ENCODE measurements at regions of chr12 and their contacts with region 1.

Region 1: GRCh38 chr12:118183705-118184104 is 47.8 kb downstream of the PEBP1 start:
- DNase-seq: no peak
- H3K4me3 ChIP-seq: no peak overlapping the region
- CTCF ChIP-seq: no peak

Region 2: GRCh38 chr12:118120579-118121363 is 62.9 kb before region 1 on chr12:
- CTCF ChIA-PET with region 1: interaction called, 14 read pairs
- POLR2A ChIA-PET with region 1: no interaction called
- DNase-seq: no peak
- H3K4me3 ChIP-seq: no peak overlapping the region
- CTCF ChIP-seq: peak; percentile 80

Region 3: DNA sequence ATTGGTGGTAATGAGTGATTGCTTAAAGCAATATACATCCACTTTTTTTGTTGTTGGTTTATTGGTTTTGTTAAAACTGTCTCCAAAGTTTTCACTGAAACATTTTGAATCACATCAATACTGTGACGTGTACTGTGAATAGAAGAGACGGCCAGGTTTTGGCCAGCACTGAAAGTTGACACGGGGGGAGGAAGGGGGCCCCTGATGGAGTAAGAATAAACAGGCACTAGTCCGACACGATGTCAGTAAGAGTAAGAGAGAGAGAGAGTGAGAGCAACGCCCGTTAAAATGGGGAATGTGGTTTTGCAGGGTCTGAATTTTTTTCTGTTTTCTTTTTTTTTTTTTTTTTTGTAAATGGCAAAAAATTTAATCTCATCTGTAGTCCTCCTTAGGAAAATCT is 33.1 kb before region 1 on chr12:
- CTCF ChIA-PET with region 1: interaction called, 16 read pairs
- POLR2A ChIA-PET with region 1: no interaction called
- DNase-seq: no peak
- H3K4me3 ChIP-seq: no peak overlapping the region
- CTCF ChIP-seq: no peak

Region 4: DNA sequence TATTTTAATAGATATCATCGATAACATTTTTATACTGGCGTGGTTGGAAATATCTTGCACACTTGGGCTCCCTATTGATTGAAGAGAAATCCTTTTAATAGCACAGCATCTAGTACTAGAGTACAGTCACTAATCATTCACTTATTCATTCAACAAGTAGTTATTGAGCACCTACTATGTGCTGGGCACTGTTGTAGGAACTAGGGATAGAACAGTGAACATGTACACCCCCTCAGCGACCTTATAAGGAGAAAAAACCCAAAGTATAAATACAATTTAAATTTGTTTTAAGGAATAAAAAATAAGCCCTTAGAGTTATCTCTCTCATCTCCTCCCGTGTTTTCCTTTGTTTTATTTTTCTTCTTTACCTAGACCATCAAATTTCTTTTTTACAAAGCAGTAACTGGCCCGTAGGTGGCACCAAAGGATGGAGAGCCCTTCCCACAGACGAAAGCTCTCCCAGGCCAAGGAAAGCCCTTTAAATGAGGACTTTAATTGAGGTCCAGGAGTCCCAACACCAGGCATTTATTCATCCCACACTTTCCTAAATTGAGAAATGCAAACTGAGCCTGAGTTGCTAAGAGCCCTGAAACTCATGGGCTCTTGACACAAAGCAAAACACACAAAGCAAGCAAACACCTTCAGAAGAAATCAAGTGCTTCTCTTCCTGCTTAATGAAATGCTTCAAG is 18.8 kb before region 1 on chr12:
- CTCF ChIA-PET with region 1: interaction called, 88 read pairs
- POLR2A ChIA-PET with region 1: no interaction called
- DNase-seq: no peak
- H3K4me3 ChIP-seq: no peak overlapping the region
- CTCF ChIP-seq: peak; percentile 45

Region 5: DNA sequence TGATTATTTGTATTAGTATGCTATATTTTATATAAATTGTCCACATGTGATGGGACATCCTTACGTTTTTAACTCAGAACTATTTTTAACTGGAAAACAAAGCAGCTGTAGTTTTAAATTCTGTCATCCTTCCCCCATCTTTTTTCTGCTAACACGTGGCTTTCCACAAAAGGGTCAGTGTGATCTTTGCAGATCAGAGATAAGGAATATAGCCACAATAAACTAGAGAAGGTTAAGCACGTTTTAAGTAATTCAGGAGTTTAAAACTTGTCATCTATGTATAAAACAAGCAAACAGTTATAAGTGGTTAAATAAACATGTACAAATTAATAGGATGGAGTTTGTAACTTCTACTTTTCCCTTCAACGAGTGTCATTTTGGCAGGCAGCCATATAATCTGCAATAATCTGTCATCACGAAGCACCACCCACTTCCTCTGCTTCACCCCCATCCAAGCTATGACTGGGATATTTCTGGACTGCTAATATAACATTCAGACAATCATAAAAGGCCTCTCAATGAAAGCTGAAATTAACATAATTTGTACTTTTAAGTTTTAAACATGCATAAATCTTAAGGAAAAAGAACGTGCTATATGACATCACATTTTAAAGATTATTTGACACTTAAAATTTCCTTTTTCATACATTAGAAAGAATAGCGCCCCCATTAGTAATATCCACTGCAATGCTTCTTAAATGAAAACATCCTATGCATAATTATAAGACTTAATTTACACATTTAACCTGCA is 173.7 kb after region 1 on chr12:
- CTCF ChIA-PET with region 1: interaction called, 31 read pairs
- POLR2A ChIA-PET with region 1: no interaction called
- DNase-seq: no peak
- H3K4me3 ChIP-seq: no peak overlapping the region
- CTCF ChIP-seq: no peak